MCF 10A (cell line): ENCODE measurements at regions of chr20 and their contacts with region 1.

Region 1: DNA sequence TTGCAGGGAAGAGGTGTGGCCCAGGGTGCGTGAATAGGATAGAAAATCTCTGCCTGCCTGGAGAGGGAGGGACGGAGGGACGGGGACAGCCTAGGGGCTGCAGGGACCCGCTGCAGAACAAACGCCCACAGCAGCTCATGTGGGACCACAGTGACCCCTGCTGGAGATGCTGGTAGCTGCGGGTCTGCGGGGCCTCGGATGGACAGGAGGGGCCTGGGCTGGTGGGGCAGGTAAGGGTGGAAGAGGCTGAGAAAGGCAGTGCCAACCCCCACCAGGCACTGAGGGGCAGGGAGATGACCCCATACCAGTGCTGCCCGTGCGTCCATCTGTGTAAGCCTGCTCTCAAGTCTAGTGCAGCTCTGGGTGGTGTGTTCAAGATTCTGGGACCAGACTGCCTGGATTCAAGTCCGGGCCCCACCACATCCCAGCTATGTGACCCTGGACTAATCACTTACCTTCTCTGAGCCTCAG is 39.4 kb downstream of the KIAA1755 start:
- DNase-seq: peak; percentile 70
- H3K4me3 Mint-ChIP-seq: no peak overlapping the region
- H3K27ac Mint-ChIP-seq: no peak overlapping the region
- H3K4me1 Mint-ChIP-seq: peaks cover 21% of the 10 kb centered on the region
- H3K27me3 Mint-ChIP-seq: no peaks in the 10 kb centered on the region
- CTCF ChIP-seq: peak; percentile 92

Region 2: GRCh38 chr20:38049800-38050199 is 171.4 kb before region 1 on chr20:
- CTCF ChIA-PET with region 1: interaction called, 782 read pairs
- POLR2A ChIA-PET with region 1: interaction called, 11 read pairs
- intact Hi-C with region 1: no loop called
- DNase-seq: peak; percentile 39
- H3K4me3 Mint-ChIP-seq: no peak overlapping the region
- H3K27ac Mint-ChIP-seq: peak overlapping the region; percentile 1
- H3K4me1 Mint-ChIP-seq: peaks cover 21% of the 10 kb centered on the region
- H3K27me3 Mint-ChIP-seq: no peaks in the 10 kb centered on the region
- CTCF ChIP-seq: no peak

Region 3: DNA sequence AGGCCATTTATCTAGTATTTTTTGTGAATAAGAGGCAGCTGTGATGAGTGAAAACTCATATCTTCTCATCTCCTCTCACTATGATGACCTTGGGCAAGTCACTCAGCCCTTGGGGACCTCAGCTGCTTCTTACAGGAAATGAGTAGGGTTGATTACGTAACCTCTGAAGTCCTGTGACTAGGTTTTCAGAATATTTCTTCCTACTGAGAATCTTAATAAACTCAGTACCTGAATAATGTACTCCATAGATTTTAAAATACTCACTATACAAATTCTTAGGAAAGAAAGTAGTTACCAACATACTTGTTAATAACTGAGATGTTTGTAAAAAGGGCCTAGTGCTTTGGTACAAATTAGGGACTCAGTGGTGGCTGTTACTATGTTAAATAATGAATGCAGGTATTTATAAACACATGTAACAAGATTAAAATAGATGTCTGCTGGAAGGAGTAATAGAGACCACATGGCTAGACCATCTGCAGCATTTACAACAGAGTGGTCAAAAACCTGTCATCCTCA is 126.7 kb before region 1 on chr20:
- CTCF ChIA-PET with region 1: interaction called, 49 read pairs
- POLR2A ChIA-PET with region 1: interaction called, 4 read pairs
- intact Hi-C with region 1: no loop called
- DNase-seq: peak; percentile 73
- H3K4me3 Mint-ChIP-seq: no peak overlapping the region
- H3K27ac Mint-ChIP-seq: peak overlapping the region; percentile 52
- H3K4me1 Mint-ChIP-seq: peaks cover 12% of the 10 kb centered on the region
- H3K27me3 Mint-ChIP-seq: no peaks in the 10 kb centered on the region
- CTCF ChIP-seq: no peak

Region 4: GRCh38 chr20:38152621-38153231 is 68.4 kb before region 1 on chr20:
- CTCF ChIA-PET with region 1: interaction called, 21 read pairs
- POLR2A ChIA-PET with region 1: no interaction called
- intact Hi-C with region 1: no loop called
- DNase-seq: peak; percentile 85
- H3K4me3 Mint-ChIP-seq: no peak overlapping the region
- H3K27ac Mint-ChIP-seq: peak overlapping the region; percentile 35
- H3K4me1 Mint-ChIP-seq: peaks cover 24% of the 10 kb centered on the region
- H3K27me3 Mint-ChIP-seq: no peaks in the 10 kb centered on the region
- CTCF ChIP-seq: no peak

Region 5: GRCh38 chr20:38190936-38191371 is 30.2 kb before region 1 on chr20:
- CTCF ChIA-PET with region 1: interaction called, 198 read pairs
- POLR2A ChIA-PET with region 1: no interaction called
- intact Hi-C with region 1: no loop called
- DNase-seq: no peak
- H3K4me3 Mint-ChIP-seq: no peak overlapping the region
- H3K27ac Mint-ChIP-seq: no peak overlapping the region
- H3K4me1 Mint-ChIP-seq: peaks cover 19% of the 10 kb centered on the region
- H3K27me3 Mint-ChIP-seq: no peaks in the 10 kb centered on the region
- CTCF ChIP-seq: no peak

Region 6: GRCh38 chr20:38252292-38253288 is 31.4 kb after region 1 on chr20:
- CTCF ChIA-PET with region 1: interaction called, 13 read pairs
- POLR2A ChIA-PET with region 1: no interaction called
- intact Hi-C with region 1: no loop called
- DNase-seq: no peak
- H3K4me3 Mint-ChIP-seq: no peak overlapping the region
- H3K27ac Mint-ChIP-seq: no peak overlapping the region
- H3K4me1 Mint-ChIP-seq: peaks cover 6% of the 10 kb centered on the region
- H3K27me3 Mint-ChIP-seq: no peaks in the 10 kb centered on the region
- CTCF ChIP-seq: no peak